ENCODE measurements at regions of chr9 and their contacts with region 1.

Region 1: GRCh38 chr9:121753802-121754654 is 102.6 kb downstream of the DAB2IP start:
- DNase-seq: peak; percentile 55
- H3K4me3 ChIP-seq: no peak overlapping the region
- H3K27ac ChIP-seq: peak overlapping the region; percentile 58
- H3K4me1 ChIP-seq: peaks cover 13% of the 10 kb centered on the region
- H3K27me3 ChIP-seq: no peaks in the 10 kb centered on the region
- CTCF ChIP-seq: no peak
- POLR2A ChIP-seq: no peak

Region 2: DNA sequence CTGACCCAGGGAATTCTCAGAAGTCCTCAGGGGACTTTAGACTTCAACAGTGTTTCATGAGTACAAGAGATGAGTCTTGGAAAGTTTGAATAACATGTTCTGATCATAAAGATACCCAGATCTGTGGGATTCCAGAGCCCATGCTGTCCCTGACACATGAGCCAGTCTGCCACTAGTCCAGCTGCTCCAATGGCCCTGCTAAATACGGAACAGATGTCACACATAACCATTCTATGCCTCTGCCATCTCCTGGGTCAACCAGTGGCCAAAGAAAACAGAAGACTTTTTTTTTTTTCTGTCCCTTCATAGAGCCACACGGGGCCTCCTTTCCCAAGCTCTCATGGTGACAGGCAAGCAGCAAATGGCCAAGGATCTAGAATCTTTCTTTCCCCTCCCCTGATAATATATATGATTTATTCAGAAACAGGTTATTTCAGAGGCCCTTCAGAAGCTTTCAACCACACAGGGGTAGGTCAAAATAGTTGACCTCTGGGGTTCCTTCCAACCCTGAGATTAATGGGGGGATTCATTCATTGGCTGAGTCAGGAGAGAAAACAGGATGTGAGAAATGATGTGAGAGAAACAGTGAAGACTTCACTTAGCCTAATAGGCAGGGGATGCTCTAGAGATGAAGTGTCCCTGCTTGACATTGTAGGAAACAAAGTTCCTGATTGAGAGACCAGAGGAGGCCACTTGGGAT is 1541.7 kb before region 1 on chr9:
- CTCF ChIA-PET with region 1: no interaction called
- POLR2A ChIA-PET with region 1: no interaction called
- dilution Hi-C with region 1: no loop called
- intact Hi-C with region 1: no loop called
- DNase-seq: no peak
- H3K4me3 ChIP-seq: no peak overlapping the region
- H3K27ac ChIP-seq: no peak overlapping the region
- H3K4me1 ChIP-seq: no peaks in the 10 kb centered on the region
- H3K27me3 ChIP-seq: no peaks in the 10 kb centered on the region
- CTCF ChIP-seq: no peak
- POLR2A ChIP-seq: no peak

Region 3: DNA sequence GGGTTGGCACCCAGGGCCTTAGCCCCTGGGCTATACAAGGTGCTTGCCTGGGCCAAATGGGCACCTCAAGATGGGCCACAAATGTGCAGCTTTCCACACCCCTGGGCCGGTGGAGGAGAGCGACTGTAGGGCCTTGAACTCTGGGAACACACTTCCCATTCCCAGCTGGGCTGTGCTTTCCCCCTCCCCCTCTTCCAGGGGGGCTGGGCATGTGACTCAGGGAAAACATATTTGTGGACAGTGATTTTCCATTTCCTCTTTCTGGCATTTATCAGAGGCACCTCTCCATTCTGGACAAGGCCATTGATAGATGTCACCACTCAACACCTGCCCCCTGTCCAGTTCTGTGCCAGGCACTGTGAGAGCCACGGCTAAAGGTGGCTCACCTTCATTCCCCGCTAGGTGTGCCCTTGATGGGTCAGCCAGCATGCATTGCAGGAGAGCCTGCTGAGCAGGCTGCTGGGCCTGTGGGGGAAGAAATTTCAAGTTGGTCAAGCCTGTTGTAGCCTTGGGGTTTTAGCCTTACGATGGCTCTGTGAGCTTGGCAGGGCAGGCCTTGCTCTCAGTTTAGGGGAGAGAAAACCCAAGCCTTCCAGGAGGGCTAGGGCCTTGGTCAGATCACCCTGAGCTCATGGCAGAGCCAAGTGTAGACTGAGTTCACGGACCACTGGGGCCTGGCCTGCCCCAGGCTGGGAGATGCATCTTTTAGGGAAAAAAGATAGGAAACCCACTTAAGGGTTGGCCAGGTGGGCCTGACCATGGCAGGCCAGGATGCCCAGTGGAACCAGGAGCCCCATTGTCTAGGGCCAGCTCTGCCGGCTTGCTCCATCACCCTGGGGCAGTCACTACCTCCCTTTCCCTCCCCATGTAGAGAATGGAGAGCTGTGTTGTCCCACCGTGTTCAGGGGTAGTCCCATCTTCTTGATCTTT is 11.3 kb after region 1 on chr9:
- CTCF ChIA-PET with region 1: no interaction called
- POLR2A ChIA-PET with region 1: no interaction called
- dilution Hi-C with region 1: no loop called
- intact Hi-C with region 1: loop called (anchors 1 kb)
- DNase-seq: peak; percentile 88
- H3K4me3 ChIP-seq: no peak overlapping the region
- H3K27ac ChIP-seq: peak overlapping the region; percentile 52
- H3K4me1 ChIP-seq: peaks cover 16% of the 10 kb centered on the region
- H3K27me3 ChIP-seq: no peaks in the 10 kb centered on the region
- CTCF ChIP-seq: no peak
- POLR2A ChIP-seq: no peak

Region 4: DNA sequence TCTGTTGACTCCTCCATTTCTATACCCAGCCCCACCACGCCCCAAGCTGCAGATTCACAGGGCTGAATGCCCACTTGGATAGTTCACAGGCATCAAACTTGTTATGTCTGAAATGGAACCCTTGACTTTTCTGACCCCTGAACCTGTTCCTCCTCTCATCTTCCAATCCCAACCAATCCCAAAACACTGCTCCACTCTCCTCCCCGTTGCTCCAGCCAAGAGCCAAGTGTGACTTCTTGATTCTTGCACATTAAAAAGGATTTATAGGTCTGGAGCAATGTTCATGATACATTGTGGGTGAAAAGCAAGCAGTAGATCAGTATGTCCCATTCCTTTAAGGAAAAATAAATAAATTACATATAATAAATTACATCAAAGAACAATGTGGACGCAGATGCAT is 43.1 kb after region 1 on chr9:
- CTCF ChIA-PET with region 1: no interaction called
- POLR2A ChIA-PET with region 1: no interaction called
- dilution Hi-C with region 1: no loop called
- intact Hi-C with region 1: loop called (anchors 2 kb)
- DNase-seq: no peak
- H3K4me3 ChIP-seq: no peak overlapping the region
- H3K27ac ChIP-seq: no peak overlapping the region
- H3K4me1 ChIP-seq: no peaks in the 10 kb centered on the region
- H3K27me3 ChIP-seq: peaks cover 3 to 5% of the 10 kb centered on the region in 2 experiments
- CTCF ChIP-seq: no peak
- POLR2A ChIP-seq: no peak